Head of caudate nucleus (tissue), 42 donors: ENCODE measurements at regions of chr7 and their contacts with region 1.

Region 1: DNA sequence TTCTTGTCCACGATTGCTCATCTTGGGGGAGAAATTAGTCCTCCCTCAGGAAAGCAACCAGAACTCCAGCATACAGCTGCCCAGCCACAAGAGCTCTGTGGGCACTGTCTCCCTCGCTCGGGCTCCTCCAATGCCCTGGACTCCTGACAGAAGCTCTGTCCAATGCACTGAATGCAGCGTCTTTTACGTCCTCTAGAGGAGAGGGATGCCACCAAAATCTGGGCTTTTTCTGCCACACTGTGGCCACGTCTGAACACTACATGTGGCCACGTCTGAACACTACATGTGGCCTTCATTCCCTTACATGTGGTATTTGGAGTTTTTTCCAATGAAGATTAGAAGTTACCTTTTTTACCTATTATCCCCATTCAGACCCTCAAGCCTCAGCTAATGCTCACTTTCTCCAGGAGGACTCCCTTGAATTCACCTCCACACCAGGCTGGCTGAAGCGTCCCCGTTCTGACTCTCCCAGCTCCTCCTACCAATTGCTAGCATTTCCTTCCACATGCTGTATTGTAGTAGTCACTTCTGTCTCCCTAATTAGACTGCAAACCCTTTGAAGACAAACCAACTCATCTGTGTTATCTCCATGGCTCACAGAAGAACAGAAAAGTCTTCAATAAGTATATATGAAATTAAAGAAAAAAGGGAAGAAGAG is 134.3 kb upstream of the PDE1C start:
- DNase-seq: peak; percentile 72 to 95 (median 88)

Region 2: GRCh38 chr7:31648288-31648687 is 556.2 kb before region 1 on chr7:
- intact Hi-C with region 1: loop called (anchors 10 kb)
- DNase-seq: peak in 5 of 42 donors; percentile 3 to 42 (median 6)

Region 3: DNA sequence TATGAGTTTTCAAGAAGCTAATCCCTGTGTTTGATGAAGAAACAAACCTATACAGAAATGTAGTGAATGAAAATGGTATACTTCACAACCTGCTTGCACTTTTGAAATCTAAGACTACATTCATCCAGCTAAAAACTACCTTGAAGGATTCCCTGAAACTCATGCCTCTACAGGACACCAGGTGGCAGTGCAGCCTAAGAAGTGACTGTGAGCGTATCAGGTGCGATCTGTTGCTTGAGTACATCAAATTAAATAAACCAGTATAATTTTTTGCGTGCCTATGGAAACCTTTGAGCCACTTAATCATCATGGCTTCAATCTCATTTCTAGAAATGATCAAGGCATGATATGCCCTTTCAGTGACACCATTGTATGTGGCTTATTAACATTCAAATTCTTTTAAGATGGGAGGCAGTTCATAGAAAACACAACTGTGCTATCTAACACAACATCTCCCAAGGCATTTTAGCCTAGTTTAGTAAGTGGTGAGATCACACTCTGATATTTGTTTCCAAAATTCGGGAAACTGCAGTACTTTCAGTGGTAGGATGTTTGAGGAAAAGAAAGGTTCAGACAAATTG is 460.1 kb before region 1 on chr7:
- intact Hi-C with region 1: loop called (anchors 2 kb)
- DNase-seq: peak; percentile 44 to 92 (median 82)

Region 4: DNA sequence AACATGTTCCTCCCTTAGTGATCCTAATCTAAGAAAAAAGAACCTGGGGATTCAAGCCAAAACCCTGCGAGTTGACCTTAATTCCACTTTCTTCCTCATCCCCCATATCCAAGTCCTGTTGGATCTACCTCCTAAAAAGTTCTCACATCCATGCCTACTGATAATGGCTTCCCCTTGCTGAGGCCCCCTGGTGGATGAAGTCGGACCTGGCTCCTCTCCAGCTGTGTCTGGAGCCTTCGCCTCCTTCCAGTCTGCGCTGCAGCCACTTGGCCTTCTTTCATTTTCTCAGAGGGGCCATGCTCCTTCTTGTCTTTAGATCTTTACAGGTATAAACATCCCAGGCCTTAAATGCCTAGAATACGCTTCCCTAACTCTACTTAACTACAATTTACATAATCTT is 142.3 kb before region 1 on chr7:
- intact Hi-C with region 1: loop called (anchors 10 kb)
- DNase-seq: peak in 36 of 42 donors; percentile 38 to 92 (median 72)

Region 5: DNA sequence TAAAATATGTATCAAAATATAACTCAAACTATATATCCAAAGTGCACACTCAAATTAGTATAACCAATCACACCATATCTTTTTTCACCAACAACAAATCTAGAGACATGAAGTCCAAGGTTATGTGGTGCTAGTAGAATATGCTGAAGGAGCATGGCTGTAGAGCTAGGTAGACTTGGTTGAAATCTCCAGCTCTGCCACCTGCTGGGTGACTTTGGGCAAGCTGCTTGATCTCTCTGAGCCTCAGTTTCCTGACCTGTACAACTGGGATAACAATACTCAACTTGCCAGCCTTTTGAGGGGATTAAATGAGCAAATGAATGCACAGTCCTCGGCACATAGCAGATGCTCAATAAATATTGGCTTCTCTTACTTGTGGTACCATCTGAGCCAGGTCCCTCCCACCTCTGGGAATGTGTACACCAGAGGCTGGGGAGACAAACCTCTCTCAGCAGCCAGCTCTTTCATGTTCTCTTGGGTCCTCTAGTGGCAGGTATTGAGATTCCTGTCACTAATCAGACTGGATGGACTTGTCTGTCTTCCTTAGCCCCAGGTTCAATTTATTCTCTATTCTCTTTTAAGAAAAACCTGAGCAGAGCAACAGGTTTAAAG is 40.0 kb before region 1 on chr7:
- intact Hi-C with region 1: no loop called
- DNase-seq: peak in 19 of 42 donors; percentile 11 to 74 (median 44)

Region 6: DNA sequence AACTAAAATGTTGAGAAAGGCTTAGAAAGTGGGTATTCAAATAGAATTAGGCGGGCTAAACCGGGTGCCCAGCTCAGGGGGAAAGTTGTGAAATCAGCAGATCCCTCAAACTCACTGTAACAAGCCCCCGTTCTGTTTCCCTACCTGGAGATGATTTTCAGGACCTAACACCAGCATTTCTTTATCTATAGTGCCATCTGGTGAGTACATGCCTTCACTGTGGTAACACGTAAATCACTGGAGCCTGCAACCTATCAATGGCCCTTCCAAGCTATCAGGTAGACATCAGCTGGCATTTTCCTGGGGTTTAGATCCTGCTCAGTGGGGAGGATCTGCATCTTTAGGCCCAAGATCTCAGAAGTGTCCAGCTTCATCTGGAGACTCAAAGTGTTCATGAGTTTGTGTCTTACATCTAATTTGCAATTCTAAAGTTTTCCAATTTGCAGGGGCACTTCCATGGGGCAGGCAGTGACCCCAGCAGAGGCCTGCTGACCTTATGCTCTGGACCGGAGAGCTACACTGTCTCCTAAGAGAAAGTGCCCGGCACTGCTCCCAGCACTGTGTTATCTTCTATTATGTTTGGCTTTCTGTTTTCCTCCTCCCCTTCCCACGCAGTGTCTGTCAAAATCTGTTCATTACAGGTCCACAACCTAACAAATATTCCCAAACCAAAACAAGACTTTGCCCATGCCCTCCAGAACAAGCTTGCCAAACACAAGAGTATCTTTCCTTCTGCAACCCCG is 153.2 kb after region 1 on chr7:
- intact Hi-C with region 1: loop called (anchors 5 kb)
- DNase-seq: peak in 7 of 42 donors; percentile 9 to 55 (median 23)

Region 7: DNA sequence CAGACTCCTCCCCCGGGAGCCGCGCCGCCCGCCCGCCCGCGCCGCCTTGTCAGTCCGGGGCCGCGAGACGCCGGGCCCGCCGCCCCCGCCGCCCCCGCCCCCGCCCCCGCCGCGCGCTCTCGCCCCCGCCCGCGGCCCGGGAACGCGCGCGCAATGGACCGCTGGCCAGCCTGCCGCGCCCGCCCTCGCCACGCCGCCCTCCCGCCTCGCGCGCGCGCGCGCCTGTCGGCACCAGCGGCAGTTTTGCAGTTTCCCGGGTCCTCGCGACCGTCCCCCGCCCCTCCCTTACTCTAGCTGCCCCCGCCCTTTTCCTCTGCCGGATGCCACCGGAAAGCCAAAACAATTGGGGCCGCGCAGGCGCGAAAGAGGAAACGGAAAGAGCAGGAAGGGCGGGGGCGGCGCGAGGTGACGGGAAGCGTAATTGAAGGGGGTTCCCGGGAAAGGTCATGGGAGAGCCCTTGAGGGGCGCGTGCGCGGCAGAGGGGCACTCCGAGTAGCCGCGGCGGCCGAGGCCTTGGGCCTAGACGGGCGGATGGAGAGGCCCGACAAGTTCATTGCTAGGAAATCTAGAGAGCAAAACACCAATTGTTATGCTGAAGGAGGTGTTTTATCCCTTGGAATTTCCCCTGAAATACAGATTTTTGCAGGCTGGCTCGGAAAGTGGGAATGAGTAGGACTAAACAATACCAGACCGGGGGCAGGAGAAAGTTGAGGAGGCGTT is 687.5 kb after region 1 on chr7:
- intact Hi-C with region 1: no loop called
- DNase-seq: peak; percentile 91 to 99 (median 96)